ENCODE measurements at regions of chr7 and their contacts with region 1.

Region 1: DNA sequence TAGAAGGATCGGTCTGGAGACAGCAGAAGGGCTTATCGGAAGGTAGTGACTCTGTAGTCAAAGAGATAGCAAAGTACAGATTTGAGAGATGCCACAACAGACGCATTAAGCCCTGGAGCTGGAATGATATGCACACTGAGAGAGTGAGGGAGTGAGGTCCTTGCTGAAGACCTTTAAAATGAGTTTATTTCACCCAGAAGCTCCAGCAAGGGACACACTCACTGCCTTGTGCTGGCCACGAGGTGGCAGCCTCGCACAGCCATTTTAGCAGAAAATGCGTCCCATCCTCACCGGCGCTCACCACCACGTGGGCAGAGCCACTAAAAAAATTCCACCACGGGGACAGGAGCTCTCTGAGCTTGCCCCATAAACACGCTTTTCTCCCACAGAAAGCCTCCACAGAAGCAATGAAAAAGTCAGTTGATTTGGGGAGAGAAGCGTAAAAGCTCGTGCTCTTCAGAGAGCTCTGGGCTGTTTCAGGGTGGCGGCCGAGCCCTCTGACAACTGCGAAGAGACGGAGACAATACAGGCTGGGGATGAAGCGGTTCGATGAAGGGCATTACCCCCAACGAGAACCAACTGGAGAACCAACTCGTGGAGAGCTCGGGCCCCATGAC is 163.0 kb upstream of the KLF14 start:
- DNase-seq: peak; percentile 86
- H3K4me3 ChIP-seq: peak overlapping the region in 1 of 2 experiments; percentile 1; a peak in 1 of 4 replicates
- H3K27ac ChIP-seq: peak overlapping the region; percentile 9 to 100; a peak in 3 of 4 replicates
- H3K4me1 ChIP-seq: peaks cover 9 to 68% of the 10 kb centered on the region in 2 experiments
- H3K27me3 ChIP-seq: no peaks in the 10 kb centered on the region
- CTCF ChIP-seq: peak; percentile 90
- EP300 ChIP-seq: no peak
- RAD21 ChIP-seq: peak; percentile 95

Region 2: DNA sequence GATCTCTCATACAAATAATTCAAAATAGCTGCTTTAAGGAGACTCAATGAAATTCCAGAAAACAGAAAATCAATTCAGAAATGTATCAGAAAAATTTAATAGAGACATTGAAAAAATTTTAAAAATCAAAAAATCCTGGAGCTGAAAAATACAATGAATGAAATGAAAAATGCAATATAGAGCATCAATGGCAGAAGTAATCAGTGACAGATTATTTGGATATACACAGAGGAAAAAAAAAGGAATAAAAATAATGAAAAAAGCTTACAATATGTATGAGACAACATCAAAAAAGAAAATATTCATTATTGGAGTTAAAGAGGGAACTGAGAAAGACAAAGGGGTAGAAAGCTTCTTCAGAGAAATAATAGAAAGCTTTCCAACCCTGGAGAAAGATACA is 40.1 kb before region 1 on chr7:
- CTCF ChIA-PET with region 1: interaction called, 11 read pairs
- POLR2A ChIA-PET with region 1: no interaction called
- DNase-seq: no peak
- H3K4me3 ChIP-seq: no peak overlapping the region
- H3K27ac ChIP-seq: no peak overlapping the region
- H3K4me1 ChIP-seq: peaks cover 0 to 5% of the 10 kb centered on the region in 2 experiments; a peak in 1 of 4 replicates
- H3K27me3 ChIP-seq: no peaks in the 10 kb centered on the region
- CTCF ChIP-seq: no peak
- EP300 ChIP-seq: no peak
- RAD21 ChIP-seq: no peak

Region 3: DNA sequence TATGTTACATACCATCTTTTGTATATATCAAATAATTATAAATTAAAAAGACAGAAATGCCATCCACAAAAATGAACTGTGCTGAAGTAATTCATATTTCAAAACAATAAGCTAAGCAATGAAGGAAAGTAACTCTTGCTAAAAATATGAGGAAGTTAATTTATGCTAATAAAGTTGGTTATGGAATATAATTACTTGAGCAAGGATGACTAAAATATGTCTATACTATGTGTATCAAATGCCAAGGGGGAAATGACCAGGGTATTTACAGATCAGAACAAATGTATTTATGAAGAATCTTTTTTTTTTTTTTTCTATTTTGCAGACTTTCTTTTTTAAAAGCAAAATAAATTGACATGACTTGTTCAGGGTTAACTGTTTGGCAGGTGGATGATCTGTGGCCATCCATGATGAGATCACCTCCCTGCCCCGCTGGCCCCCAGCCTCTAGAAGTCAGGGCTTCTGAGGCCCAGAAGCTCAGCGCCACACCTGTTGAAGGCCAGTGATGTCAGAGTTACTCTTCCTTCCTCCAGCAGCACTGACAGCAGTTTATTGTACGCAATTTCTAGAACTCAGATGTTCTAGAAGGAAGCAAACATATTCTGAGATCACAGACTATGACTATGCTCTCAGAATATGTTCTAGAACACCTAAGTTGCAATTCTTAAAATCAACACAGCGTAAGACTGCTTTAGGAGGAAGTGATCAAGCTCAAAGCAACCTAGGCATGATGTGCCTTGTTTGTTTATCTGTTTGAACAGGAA is 33.1 kb after region 1 on chr7:
- CTCF ChIA-PET with region 1: interaction called, 36 read pairs
- POLR2A ChIA-PET with region 1: no interaction called
- DNase-seq: no peak
- H3K4me3 ChIP-seq: no peak overlapping the region
- H3K27ac ChIP-seq: no peak overlapping the region
- H3K4me1 ChIP-seq: peaks cover 0 to 19% of the 10 kb centered on the region in 2 experiments; a peak in 1 of 4 replicates
- H3K27me3 ChIP-seq: no peaks in the 10 kb centered on the region
- CTCF ChIP-seq: no peak
- EP300 ChIP-seq: no peak
- RAD21 ChIP-seq: no peak

Region 4: GRCh38 chr7:130961128-130961601 is 64.2 kb after region 1 on chr7:
- CTCF ChIA-PET with region 1: interaction called, 14 read pairs
- POLR2A ChIA-PET with region 1: no interaction called
- DNase-seq: no peak
- H3K4me3 ChIP-seq: peak overlapping the region; percentile 43 to 57; a peak in 3 of 4 replicates
- H3K27ac ChIP-seq: peak overlapping the region; percentile 92 to 100
- H3K4me1 ChIP-seq: peaks cover 4 to 50% of the 10 kb centered on the region in 2 experiments
- H3K27me3 ChIP-seq: no peaks in the 10 kb centered on the region
- CTCF ChIP-seq: no peak
- EP300 ChIP-seq: no peak
- RAD21 ChIP-seq: no peak

Region 5: DNA sequence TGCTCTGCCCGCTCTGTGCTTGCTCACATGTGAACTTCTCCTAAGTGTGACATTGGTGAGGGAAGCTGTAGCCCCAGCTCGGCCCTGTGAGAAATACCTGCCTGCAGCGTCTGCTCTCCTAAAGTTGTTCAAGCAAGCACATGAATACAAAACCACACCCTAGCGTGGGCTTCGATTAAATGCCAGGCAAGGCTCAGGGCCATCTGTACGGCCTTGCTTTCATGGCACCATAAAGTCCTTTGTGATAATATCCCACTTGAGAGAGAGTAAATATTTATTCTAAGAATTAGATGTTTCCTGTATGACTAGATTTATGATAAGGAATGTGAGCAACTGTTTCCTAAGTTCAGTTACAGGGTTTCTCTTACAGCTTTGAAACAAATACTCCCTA is 99.8 kb after region 1 on chr7:
- CTCF ChIA-PET with region 1: interaction called, 26 read pairs
- POLR2A ChIA-PET with region 1: no interaction called
- DNase-seq: no peak
- H3K4me3 ChIP-seq: no peak overlapping the region
- H3K27ac ChIP-seq: peak overlapping the region in 1 of 2 experiments; percentile 51; a peak in 2 of 4 replicates
- H3K4me1 ChIP-seq: peaks cover 5 to 31% of the 10 kb centered on the region in 2 experiments; a peak in 3 of 4 replicates
- H3K27me3 ChIP-seq: no peaks in the 10 kb centered on the region
- CTCF ChIP-seq: no peak
- EP300 ChIP-seq: no peak
- RAD21 ChIP-seq: no peak

Region 6: DNA sequence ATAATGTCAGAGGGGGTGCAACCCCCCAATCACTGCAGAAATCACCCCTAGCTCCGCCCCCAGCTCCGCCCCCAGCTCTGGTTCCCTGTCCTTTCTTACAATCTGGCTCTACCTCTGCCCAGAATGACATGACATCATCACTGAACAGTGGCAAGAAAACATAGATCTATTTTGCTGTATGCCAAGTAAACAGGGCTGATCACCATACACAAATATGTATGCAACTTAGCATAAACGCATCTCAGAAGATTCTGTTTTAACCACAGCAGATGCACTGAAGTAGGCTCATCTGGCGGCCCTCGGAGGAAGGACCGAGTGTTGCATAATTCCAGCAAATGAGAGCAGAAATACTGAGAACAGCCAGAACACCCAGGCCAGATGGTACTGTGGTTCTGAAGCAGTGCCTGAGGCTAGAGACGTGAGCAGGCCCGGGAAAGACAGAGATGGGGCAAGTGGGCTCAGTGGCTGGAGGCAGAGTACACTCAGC is 130.3 kb after region 1 on chr7:
- CTCF ChIA-PET with region 1: interaction called, 33 read pairs
- POLR2A ChIA-PET with region 1: no interaction called
- DNase-seq: peak; percentile 65
- H3K4me3 ChIP-seq: no peak overlapping the region
- H3K27ac ChIP-seq: peak overlapping the region; percentile 13 to 46
- H3K4me1 ChIP-seq: peaks cover 9 to 20% of the 10 kb centered on the region in 2 experiments; a peak in 3 of 4 replicates
- H3K27me3 ChIP-seq: no peaks in the 10 kb centered on the region
- CTCF ChIP-seq: peak; percentile 15; the same call in 1 of the 2 replicates
- EP300 ChIP-seq: no peak; a peak in 1 of 4 replicates
- RAD21 ChIP-seq: no peak

Region 7: GRCh38 chr7:131051304-131051703 is 154.3 kb after region 1 on chr7:
- CTCF ChIA-PET with region 1: interaction called, 32 read pairs
- POLR2A ChIA-PET with region 1: no interaction called
- DNase-seq: no peak
- H3K4me3 ChIP-seq: no peak overlapping the region
- H3K27ac ChIP-seq: no peak overlapping the region; a peak in 1 of 4 replicates
- H3K4me1 ChIP-seq: no peaks in the 10 kb centered on the region; a peak in 1 of 4 replicates
- H3K27me3 ChIP-seq: no peaks in the 10 kb centered on the region
- CTCF ChIP-seq: no peak
- EP300 ChIP-seq: no peak
- RAD21 ChIP-seq: no peak